ENCODE measurements at regions of chr2 and their contacts with region 1.

Region 1: GRCh38 chr2:217622205-217623060 is 380.4 kb downstream of the TNS1 start:
- DNase-seq: peak; percentile 98
- ATAC-seq: peak; percentile 90
- H3K4me3 ChIP-seq: no peak overlapping the region
- H3K27ac ChIP-seq: peak overlapping the region; percentile 68
- H3K4me1 ChIP-seq: peaks cover 27% of the 10 kb centered on the region
- H3K27me3 ChIP-seq: no peaks in the 10 kb centered on the region
- CTCF ChIP-seq: no peak
- POLR2A ChIP-seq: no peak
- RAD21 ChIP-seq: no peak

Region 2: GRCh38 chr2:217573571-217573970 is 48.9 kb before region 1 on chr2:
- CTCF ChIA-PET with region 1: no interaction called
- POLR2A ChIA-PET with region 1: no interaction called
- dilution Hi-C with region 1: no loop called
- in situ Hi-C with region 1: no loop called
- intact Hi-C with region 1: loop called (anchors 5 kb)
- DNase-seq: peak; percentile 89
- ATAC-seq: peak; percentile 93
- H3K4me3 ChIP-seq: no peak overlapping the region
- H3K27ac ChIP-seq: no peak overlapping the region
- H3K4me1 ChIP-seq: peaks cover 3% of the 10 kb centered on the region; the same call in 1 of the 2 replicates
- H3K27me3 ChIP-seq: peaks cover 2% of the 10 kb centered on the region; the same call in 1 of the 2 replicates
- CTCF ChIP-seq: 0 out of 2 replicates have a peak, but pooled peaks have one; percentile 22
- POLR2A ChIP-seq: no peak
- RAD21 ChIP-seq: peak; percentile 28

Measured in IMR-90 (cell line).